GM10248 (cell line): ENCODE measurements at regions of chr6 and their contacts with region 1.

Region 1: DNA sequence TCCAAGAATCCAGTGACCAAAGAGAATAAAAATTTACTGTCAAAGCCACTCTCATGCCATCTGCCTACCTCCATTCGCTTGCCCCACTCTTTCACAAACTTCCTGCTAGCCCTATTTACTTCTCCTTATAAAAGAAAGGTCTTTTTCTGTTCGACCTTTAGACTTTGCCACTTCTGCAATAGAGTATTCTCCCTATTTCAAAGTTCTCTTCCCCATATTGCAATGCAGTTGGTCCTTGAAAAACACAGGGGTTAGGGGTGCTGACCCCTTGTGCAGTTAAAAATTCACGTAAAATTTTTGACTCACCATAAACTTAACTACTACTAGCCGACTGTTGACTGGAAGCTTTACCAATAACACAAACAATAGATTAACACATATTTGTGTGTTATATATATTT is 15.0 kb downstream of the CCN2 start:
- DNase-seq: no peak
- CTCF ChIP-seq: no peak

Region 2: GRCh38 chr6:131923356-131923755 is 12.8 kb before region 1 on chr6:
- CTCF ChIA-PET with region 1: interaction called, 10 read pairs
- POLR2A ChIA-PET with region 1: no interaction called
- DNase-seq: no peak
- CTCF ChIP-seq: peak; percentile 47

Region 3: DNA sequence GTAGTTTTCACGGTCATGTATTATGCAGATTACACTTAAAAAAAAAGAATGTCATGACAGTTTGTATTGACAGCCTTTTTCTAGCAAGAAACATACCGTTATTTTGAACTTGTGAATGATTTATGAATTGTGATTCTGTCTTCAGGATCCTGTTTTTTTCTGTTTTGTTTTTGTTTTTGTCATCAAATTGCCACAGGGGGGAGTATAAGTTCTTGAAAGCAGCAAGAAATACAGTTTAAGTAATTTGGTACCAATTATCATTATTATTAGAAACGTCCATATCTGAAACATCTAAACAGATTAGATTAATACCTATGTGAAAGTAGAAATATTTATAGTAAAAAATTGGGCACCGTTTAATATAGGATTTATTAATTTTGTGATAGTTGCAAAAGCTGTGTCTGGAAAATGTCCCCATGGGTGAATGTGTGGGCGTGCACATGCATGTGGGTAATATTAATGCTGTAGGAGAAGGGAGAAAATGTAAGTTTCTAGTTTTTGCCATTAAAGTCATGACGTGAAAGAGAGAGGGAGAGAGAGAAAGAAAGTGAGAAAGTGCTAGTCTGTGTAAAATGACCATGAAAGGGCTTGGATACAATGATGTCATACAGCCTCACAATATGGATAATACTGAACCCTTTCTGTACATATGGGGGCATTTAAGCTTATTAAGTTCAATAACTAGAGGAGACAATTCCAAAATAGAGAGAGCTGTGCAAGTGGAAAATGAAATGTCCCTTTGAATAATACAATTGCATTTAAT is 24.4 kb after region 1 on chr6:
- CTCF ChIA-PET with region 1: no interaction called
- POLR2A ChIA-PET with region 1: no interaction called
- DNase-seq: no peak
- CTCF ChIP-seq: peak; percentile 27